PC-3 (cell line): ENCODE measurements at regions of chr13 and their contacts with region 1.

Region 1: DNA sequence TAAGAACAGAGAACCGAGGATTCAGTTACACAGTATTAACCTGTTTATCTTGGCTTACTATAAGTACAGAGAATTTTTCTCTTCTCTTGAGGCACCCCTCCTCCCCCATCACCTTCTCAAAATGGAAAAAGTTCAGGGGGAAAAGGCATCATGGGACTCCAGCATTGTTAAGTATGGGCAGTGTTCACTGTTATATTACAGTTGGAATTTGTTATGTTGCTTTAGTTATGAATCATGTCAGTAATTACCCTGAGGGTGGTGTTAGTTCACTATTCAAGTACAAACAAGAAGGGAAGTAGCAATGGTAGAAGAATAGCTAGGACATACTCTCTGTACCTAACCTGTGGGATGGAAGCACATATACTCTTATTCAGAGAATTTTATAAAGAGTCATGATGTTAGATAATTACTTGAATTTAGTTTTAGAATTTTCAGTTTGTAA is 12.0 kb downstream of the LPAR6 start:
- DNase-seq: peak; percentile 59
- ATAC-seq: peak; percentile 83
- H3K4me3 ChIP-seq: no peak overlapping the region
- H3K27ac ChIP-seq: peak overlapping the region; percentile 54
- H3K4me1 ChIP-seq: peaks cover 36% of the 10 kb centered on the region
- H3K27me3 ChIP-seq: no peaks in the 10 kb centered on the region
- CTCF ChIP-seq: 0 out of 2 replicates have a peak, but pooled peaks have one; percentile 10

Region 2: DNA sequence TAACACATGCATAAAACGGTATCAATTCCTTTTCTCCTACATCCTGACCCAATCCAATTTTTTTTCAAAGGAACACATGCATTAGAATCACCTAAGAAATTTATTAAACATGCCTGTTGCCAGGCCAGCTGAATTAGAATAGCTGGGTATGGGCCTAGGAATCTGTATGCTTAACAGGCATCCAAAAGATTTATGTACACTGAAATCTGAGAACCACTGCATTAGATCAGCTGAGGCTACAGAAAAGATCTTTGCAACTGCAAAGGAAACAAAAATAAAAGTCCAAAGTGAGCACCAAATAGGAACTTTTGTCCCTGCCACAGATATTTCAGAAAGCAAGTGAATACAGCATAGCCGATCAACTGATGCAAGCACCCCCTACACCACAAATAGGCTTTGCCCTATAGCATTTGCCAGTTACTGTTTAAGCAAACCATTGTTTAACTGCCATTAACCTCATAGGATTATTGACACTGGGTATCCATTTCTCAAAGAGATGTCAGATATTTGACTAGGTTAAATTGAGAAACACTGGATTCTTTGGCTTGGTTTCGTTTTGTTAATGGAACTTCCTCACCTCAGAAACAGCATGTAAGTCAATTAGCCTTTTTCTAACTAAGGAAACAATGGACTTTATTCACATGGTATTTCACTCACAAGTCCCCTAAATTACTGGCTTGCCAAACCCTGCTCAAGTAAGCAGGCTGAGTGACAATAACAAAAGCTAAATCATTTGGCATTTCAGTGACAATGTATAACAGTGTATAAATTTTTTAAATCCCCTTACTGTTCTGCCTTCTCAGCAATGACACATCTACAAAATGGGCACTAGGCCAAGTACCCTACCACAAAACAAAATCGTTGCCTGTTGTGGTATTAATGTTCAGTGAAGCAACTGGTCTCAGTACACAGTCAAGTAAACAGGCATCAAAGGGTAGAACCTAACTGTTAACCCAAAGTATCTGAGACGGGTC is 467.6 kb before region 1 on chr13:
- CTCF ChIA-PET with region 1: no interaction called
- POLR2A ChIA-PET with region 1: interaction called, 19 read pairs
- intact Hi-C with region 1: no loop called
- DNase-seq: peak; percentile 17
- ATAC-seq: no peak
- H3K4me3 ChIP-seq: no peak overlapping the region
- H3K27ac ChIP-seq: no peak overlapping the region
- H3K4me1 ChIP-seq: peaks cover 5% of the 10 kb centered on the region; the same call in 1 of the 2 replicates
- H3K27me3 ChIP-seq: no peaks in the 10 kb centered on the region
- CTCF ChIP-seq: no peak

Region 3: GRCh38 chr13:48448959-48449614 is 48.2 kb after region 1 on chr13:
- CTCF ChIA-PET with region 1: no interaction called
- POLR2A ChIA-PET with region 1: interaction called, 5 read pairs
- intact Hi-C with region 1: loop called (anchors 2 kb)
- DNase-seq: peak; percentile 78
- ATAC-seq: peak; percentile 29
- H3K4me3 ChIP-seq: peak overlapping the region; percentile 10; the same call in 1 of the 2 replicates
- H3K27ac ChIP-seq: peak overlapping the region; percentile 68
- H3K4me1 ChIP-seq: peaks cover 45% of the 10 kb centered on the region
- H3K27me3 ChIP-seq: no peaks in the 10 kb centered on the region
- CTCF ChIP-seq: no peak

Region 4: DNA sequence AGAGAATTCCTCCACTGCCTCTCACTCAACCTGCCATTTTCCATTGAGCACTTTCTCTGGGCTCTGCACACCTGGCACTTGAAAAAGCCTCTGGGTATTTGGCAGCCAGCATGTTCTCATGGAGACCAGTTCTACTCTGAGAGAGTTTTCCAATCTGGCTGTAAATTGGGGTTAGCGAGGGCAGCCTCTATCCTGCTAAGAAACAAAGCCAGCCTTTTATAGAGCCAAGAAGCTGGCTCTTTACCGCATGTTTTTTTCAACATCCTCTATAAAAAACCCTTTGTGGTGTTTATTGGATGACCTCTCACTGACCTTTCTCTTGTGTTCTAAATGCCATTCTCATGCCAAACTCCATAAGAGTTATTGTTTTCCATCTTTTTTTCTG is 184.6 kb after region 1 on chr13:
- CTCF ChIA-PET with region 1: interaction called, 10 read pairs
- POLR2A ChIA-PET with region 1: no interaction called
- intact Hi-C with region 1: loop called (anchors 1 kb)
- DNase-seq: peak; percentile 89
- ATAC-seq: peak; percentile 84
- H3K4me3 ChIP-seq: no peak overlapping the region
- H3K27ac ChIP-seq: peak overlapping the region; percentile 87
- H3K4me1 ChIP-seq: peaks cover 30% of the 10 kb centered on the region
- H3K27me3 ChIP-seq: no peaks in the 10 kb centered on the region
- CTCF ChIP-seq: no peak